IMR-90 (cell line): ENCODE measurements at regions of chr1 and their contacts with region 1.

Region 1: DNA sequence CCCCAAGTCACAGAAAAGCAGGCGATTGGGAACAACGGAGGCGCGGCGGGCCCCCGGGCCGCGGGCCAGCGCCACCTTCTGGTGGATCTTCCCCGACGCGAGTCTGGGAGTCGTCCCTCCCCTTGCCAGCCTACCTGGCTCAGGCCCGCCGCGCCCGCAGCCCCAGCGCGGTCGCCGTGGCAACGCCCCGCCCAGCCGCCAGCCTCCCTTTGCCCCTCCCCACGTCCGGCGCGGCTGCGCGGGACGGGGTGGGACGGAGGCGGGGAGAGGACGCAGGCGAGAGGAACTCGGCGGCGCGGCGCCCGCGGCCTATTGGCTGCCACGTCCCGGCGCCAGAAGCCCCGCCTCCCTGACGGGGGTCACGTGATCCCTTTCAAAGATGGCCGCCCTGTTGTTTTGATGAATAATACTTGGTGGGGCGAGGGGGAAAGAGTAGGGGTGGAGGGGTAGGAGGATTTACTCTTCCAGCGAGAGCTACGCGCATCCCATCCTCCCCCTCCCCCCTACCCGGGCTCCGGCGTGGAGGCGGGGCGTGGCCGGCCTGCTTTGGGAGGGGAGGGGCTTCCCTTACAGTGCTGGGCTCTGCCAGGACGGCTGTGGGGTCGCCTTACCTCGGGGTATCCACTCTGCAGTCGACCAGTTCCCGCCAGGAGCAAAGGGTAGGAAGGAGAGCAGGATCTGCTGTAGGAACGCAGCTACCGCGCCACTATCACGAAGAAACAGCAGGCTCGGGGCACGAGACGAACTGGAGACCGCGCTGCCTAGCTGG is at the start of gene UBE4B:
- DNase-seq: peak; percentile 97
- ATAC-seq: peak; percentile 98
- H3K4me3 ChIP-seq: peak within 1 kb of the TSS; percentile 70
- H3K27ac ChIP-seq: peak within 1 kb of the TSS; percentile 84
- H3K4me1 ChIP-seq: peaks cover 6% of the 10 kb centered on the region; the same call in 1 of the 2 replicates
- H3K27me3 ChIP-seq: no peaks in the 10 kb centered on the region
- CTCF ChIP-seq: peak; percentile 87
- POLR2A ChIP-seq: no peak; the same call in 1 of the 2 replicates
- RAD21 ChIP-seq: peak; percentile 74
- total RNA-seq, gene UBE4B: 39.3 and 41.9 TPM in 2 replicates

Region 2: DNA sequence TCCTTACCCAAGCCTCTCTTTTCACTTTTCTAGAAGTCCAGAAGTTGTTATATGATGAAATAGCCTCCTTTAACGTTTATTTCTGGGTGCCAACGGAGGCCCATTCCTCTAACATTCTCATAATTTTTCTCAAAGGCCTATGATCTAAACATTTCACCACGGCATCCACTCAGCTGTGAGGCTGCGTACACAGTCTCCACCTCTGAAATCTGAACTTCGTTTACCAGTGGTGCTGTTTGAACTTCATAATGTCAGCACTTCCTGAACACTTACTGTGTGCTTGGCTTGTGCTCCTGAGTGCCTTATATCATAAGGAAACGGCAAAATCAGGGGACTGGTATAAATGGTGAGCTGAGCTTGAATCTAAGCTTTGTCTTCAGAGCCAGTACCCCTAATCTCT is 47.8 kb before region 1 on chr1:
- CTCF ChIA-PET with region 1: no interaction called
- POLR2A ChIA-PET with region 1: no interaction called
- dilution Hi-C with region 1: no loop called
- in situ Hi-C with region 1: no loop called
- intact Hi-C with region 1: loop called (anchors 5 kb)
- DNase-seq: peak; percentile 64
- ATAC-seq: peak; percentile 99
- H3K4me3 ChIP-seq: no peak overlapping the region
- H3K27ac ChIP-seq: peak overlapping the region; percentile 57; the same call in 1 of the 2 replicates
- H3K4me1 ChIP-seq: peaks cover 6% of the 10 kb centered on the region
- H3K27me3 ChIP-seq: no peaks in the 10 kb centered on the region
- CTCF ChIP-seq: no peak
- POLR2A ChIP-seq: no peak
- RAD21 ChIP-seq: no peak

Region 3: DNA sequence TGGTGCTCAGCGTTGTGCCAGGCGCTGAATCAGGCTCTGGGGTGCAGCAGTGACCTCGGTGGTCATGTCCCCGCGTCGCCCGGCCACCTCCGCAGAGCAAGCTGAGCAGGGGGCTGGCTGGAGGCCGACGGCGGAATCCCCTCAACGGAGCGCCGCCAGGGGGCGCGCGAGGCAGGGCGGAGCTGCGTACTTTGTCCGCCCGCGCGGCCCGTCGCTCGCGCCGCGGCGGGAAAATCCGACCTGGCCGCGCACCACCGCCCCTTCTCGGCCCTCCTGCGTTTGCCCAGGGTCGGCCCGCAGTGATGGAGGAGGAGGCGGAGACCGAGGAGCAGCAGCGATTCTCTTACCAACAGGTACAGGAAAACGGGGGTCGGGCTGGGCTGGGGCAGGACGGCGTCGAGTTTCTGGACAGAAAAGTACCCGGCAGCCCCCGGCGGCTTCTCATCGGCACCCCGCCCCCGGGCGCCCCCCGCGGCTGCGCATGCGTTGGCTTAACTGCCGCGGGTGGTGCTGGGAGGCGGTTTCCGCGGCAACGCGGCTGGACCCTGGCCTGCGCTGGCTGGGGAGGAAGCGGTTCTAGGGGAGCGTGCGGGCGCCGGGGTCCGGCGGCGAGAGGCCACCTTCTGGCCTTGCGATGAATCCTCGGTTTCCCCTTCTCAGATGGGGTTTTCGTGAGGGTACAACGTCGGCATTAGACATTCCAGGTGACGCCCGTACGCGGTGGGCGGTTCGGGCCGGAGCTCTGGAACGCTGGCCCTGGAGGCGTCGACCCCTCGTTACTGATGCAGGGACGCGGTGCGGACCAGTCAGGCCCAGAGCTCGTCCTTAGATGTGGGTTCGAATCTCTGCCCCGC is 397.7 kb after region 1 on chr1 and contains the start of gene CENPS:
- CTCF ChIA-PET with region 1: no interaction called
- POLR2A ChIA-PET with region 1: no interaction called
- dilution Hi-C with region 1: no loop called
- in situ Hi-C with region 1: no loop called
- intact Hi-C with region 1: loop called (anchors 10 kb)
- DNase-seq: peak; percentile 83
- ATAC-seq: peak; percentile 95
- H3K4me3 ChIP-seq: peak within 1 kb of the TSS; percentile 76
- H3K27ac ChIP-seq: peak within 1 kb of the TSS; percentile 86
- H3K4me1 ChIP-seq: peaks cover 2% of the 10 kb centered on the region; the same call in 1 of the 2 replicates
- H3K27me3 ChIP-seq: no peaks in the 10 kb centered on the region
- CTCF ChIP-seq: peak; percentile 98
- POLR2A ChIP-seq: no peak; the same call in 1 of the 2 replicates
- RAD21 ChIP-seq: peak; percentile 66
- total RNA-seq, gene CENPS: 9.9 and 11.4 TPM in 2 replicates